ENCODE measurements at regions of chr1 and their contacts with region 1.

Region 1: GRCh38 chr1:28178690-28179485 is 2.4 kb upstream of the PTAFR start:
- DNase-seq: no peak
- H3K4me3 ChIP-seq: no peak overlapping the region
- H3K27ac ChIP-seq: no peak overlapping the region
- H3K4me1 ChIP-seq: no peaks in the 10 kb centered on the region
- H3K27me3 ChIP-seq: no peaks in the 10 kb centered on the region
- CTCF ChIP-seq: no peak
- POLR2A ChIP-seq: no peak

Region 2: GRCh38 chr1:28021064-28021463 is 157.8 kb before region 1 on chr1:
- intact Hi-C with region 1: no loop called
- DNase-seq: no peak
- H3K4me3 ChIP-seq: no peak overlapping the region
- H3K27ac ChIP-seq: no peak overlapping the region
- H3K4me1 ChIP-seq: no peaks in the 10 kb centered on the region
- H3K27me3 ChIP-seq: no peaks in the 10 kb centered on the region
- CTCF ChIP-seq: no peak
- POLR2A ChIP-seq: no peak

Region 3: GRCh38 chr1:28156821-28157220 is 22.1 kb before region 1 on chr1:
- intact Hi-C with region 1: loop called (anchors 1 kb)
- DNase-seq: no peak
- H3K4me3 ChIP-seq: no peak overlapping the region
- H3K27ac ChIP-seq: no peak overlapping the region
- H3K4me1 ChIP-seq: no peaks in the 10 kb centered on the region
- H3K27me3 ChIP-seq: no peaks in the 10 kb centered on the region
- CTCF ChIP-seq: no peak
- POLR2A ChIP-seq: no peak

Region 4: DNA sequence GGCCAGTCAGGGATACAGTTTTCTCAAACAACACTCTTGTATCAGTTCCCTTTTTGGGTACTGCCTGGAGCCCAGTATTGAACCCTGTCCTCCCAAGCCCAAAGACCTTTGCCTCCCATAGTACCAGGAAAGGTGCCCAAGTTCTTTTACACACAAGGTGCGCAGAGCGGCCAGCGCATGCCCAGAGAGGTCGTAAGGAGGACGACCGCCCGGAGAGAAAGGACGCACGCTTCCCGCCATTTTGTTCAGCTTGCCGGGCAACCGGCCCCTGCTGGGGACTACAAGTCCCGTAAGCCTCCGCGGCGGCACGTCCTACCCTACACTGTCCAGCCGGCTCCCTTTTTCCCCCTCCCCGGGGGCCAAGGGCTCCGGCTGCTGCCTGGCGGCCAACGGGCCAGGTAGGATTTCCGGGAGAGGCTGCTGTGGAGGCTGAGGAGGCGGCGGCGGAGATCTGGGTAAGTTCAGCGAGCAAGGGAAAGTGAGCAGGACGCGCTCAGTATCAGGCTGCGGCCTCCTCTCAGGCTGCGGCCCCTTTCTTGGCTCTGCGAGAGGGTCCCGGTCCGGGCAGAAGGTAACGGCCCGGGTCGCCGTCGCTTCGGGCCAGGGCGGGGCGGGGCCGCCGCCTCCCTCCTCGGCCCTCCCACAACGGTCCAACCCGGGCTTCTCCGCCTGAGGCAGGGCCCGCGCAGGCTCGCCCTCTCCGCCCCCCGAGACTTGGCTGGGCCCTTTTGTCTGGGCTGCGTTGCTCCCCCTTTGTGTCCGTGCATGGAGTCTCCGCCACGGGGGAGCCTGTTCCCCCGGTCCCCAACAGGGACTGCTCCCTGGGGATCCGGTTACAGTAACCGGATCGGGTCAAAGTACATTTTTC is 190.7 kb after region 1 on chr1 and contains the start of gene PHACTR4:
- intact Hi-C with region 1: no loop called
- DNase-seq: peak; percentile 82 to 90
- H3K4me3 ChIP-seq: peak within 1 kb of the TSS; percentile 80 to 98 (median 82)
- H3K27ac ChIP-seq: peak within 1 kb of the TSS; percentile 92 to 94
- H3K4me1 ChIP-seq: no peaks in the 10 kb centered on the region
- H3K27me3 ChIP-seq: no peaks in the 10 kb centered on the region
- CTCF ChIP-seq: no peak
- POLR2A ChIP-seq: peak; percentile 51
- total RNA-seq, gene PHACTR4: 17.1 to 29.6 (median 25.9) TPM

Region 5: DNA sequence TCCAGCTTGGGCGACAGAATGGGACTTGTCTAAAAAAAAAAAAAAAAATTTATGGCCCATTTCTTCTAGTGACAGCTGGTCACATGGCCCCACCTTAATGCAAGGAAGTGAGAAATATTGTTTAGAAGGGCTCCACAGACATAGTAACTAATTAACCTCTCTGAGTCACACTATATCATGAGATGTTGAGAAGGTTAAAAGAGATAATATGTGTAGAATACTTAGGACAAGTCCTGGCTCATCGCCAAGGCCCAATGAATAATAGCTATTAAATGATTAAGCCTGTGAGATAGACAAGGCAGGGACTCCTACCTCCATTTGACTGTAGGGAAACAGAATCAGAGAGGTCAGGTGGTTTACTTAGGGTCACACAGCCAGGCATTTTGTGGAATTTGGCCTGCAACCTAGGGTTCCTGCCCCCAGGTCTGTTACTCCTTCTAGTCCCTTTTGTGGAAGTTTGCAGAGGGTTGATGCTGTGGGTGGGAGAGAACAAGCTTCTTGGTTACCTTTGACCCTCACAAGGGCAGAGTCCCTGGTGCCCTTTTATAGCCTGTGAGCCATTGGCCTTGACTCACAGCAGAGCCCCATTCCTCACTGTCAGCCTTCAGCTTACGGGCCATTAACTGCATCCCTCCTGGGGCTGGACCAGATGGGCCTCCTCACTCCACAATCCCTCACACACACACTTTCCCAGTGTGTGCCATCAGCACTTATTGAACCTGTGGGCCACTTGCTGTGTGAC is 681.6 kb after region 1 on chr1:
- intact Hi-C with region 1: no loop called
- DNase-seq: no peak
- H3K4me3 ChIP-seq: no peak overlapping the region
- H3K27ac ChIP-seq: no peak overlapping the region
- H3K4me1 ChIP-seq: no peaks in the 10 kb centered on the region
- H3K27me3 ChIP-seq: no peaks in the 10 kb centered on the region
- CTCF ChIP-seq: no peak
- POLR2A ChIP-seq: no peak